ENCODE measurements at regions of chr17 and their contacts with region 1.

Region 1: DNA sequence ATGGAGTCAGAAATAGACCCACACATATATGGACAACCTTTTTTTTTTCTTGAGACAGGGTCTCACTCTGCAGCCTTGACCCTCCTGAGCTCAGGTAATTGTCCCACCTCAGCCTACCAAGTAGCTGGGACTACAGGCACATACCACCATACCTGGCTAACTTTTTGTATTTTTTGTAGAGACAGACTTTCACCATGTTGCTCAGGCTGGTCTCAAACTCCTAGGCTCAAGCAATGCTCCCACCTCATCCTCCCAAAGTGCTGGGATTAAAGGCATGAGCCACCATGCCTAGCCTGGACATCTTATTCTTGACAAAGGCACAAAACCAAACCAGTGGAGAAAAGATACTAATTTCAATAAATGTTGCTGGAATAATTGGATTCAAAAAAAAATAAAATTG is 14.7 kb upstream of the NACA2 start:
- DNase-seq: no peak
- ATAC-seq: no peak

Region 2: GRCh38 chr17:61504697-61505349 is 100.9 kb before region 1 on chr17:
- intact Hi-C with region 1: no loop called
- DNase-seq: no peak
- ATAC-seq: no peak

Region 3: DNA sequence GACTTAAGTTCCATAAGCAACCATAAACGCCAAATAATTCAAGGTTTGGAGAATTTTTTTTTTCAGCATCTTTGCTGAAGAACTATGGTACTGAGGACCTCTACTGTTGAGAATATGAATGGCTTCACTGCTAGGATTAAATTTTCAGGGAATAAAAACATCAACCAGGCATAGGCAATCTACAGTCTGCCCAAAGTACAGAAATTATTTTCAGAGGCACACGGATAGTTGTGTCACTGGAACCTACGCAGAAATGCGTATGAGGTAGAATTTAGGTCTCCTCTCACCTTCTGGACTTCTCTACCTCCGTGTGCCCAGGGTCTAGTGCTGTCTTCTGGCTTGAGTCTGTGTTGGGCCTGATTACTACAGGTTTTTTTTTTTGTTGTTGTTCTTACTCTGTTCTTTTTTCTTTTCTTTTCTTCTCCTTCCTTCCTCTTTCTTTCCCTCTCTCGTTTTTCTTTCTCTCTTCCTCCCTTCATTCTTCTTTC is 54.4 kb before region 1 on chr17:
- intact Hi-C with region 1: no loop called
- DNase-seq: no peak
- ATAC-seq: no peak

Region 4: GRCh38 chr17:61574542-61575174 is 31.0 kb before region 1 on chr17:
- intact Hi-C with region 1: no loop called
- DNase-seq: no peak
- ATAC-seq: peak; percentile 59

Region 5: GRCh38 chr17:62101090-62101489 is 495.4 kb after region 1 on chr17:
- intact Hi-C with region 1: loop called (anchors 5 kb)
- DNase-seq: no peak
- ATAC-seq: no peak

Measured in sciatic nerve (tissue), 2 donors.